Caco-2 (cell line): ENCODE measurements at regions of chr13 and their contacts with region 1.

Region 1: DNA sequence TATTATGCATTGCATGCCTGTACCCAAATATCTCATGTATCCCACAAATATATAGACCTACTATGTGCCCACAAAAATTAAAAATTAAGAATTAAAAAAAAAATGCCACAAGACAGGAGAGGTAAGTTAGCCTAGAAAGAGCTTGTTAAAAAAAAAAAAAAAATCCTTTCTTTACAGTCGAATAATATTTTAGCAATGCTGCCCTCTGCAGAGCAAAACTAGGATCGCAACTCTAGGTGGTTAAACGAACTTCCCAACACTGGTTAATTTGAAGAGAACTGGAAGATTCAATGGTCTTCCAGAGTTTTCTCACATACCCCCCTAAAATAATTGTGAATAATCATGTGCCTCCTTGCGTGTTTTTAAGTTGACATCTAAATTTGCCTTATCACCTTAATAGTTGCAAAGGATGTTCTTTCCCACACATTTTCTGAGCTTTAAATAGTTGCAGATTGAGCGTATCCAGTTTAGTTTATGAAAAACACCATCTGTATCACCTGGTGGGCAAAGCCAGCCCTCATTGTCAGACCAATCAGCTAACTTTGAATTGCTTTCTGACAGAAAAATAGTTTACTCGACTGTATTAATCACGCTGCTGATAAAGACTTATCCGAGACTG is 47.4 kb upstream of the RCBTB2 start:
- DNase-seq: peak; percentile 57 to 77
- H3K4me3 ChIP-seq: no peak overlapping the region
- H3K4me3 Mint-ChIP-seq: no peak overlapping the region
- H3K27ac Mint-ChIP-seq: no peak overlapping the region
- H3K4me1 ChIP-seq: peaks cover 6% of the 10 kb centered on the region; the same call in 1 of the 2 replicates
- H3K4me1 Mint-ChIP-seq: no peaks in the 10 kb centered on the region
- H3K27me3 ChIP-seq: no peaks in the 10 kb centered on the region
- H3K27me3 Mint-ChIP-seq: peaks cover 3% of the 10 kb centered on the region
- CTCF ChIP-seq: peak; percentile 73 to 75

Region 2: DNA sequence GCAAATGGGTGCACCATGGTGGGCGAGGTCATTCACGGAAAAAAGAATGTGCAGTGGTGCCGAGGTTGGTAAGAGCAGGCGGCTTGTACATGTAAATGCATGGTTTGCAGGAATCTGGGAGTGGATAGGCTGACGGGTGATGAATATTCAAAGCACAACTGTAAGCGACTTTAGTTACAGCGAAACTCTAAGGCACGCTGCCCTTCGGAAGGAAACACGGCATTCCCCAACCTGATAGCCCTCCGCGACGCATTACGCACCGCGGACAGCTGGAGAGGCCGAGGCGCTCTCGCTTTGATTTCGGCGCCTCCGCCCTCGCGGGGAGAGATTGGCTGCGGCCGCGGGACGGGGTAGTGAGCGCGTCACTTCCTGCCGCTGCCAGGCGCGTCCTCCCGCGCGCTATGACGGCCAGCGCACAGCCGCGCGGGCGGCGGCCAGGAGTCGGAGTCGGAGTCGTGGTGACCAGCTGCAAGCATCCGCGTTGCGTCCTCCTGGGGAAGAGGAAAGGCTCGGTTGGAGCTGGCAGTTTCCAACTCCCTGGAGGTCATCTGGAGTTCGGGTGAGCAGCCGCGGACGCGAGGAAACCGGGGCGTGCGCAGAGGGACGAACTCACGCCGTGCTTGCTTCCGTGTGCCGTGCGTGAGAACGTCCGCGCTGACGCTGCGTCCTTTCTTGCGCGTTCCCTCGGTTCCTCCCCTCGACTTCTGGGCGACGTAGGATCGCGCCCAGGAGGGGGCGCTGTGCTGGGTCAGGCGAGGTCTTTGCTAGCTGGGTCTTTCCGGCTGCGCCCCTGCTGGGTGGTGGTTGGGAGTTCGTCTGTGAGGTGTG is 542.7 kb before region 1 on chr13 and contains the start of gene NUDT15:
- CTCF ChIA-PET with region 1: interaction called, 4 read pairs
- POLR2A ChIA-PET with region 1: no interaction called
- intact Hi-C with region 1: loop called (anchors 1 kb)
- DNase-seq: peak; percentile 96 to 98
- H3K4me3 ChIP-seq: peak within 1 kb of the TSS; percentile 55
- H3K4me3 Mint-ChIP-seq: peak within 1 kb of the TSS; percentile 96
- H3K27ac Mint-ChIP-seq: peak within 1 kb of the TSS; percentile 95
- H3K4me1 ChIP-seq: peaks cover 25% of the 10 kb centered on the region; the same call in 1 of the 2 replicates
- H3K4me1 Mint-ChIP-seq: peaks cover 10% of the 10 kb centered on the region
- H3K27me3 ChIP-seq: no peaks in the 10 kb centered on the region
- H3K27me3 Mint-ChIP-seq: no peaks in the 10 kb centered on the region
- CTCF ChIP-seq: peak; percentile 99 to 100
- total RNA-seq, gene NUDT15: 32.3 and 36.0 TPM in 2 replicates

Region 3: GRCh38 chr13:48126944-48127830 is 453.1 kb before region 1 on chr13:
- CTCF ChIA-PET with region 1: interaction called, 9 read pairs
- POLR2A ChIA-PET with region 1: no interaction called
- intact Hi-C with region 1: loop called (anchors 1 kb)
- DNase-seq: peak in 1 of 2 experiments; percentile 61
- H3K4me3 ChIP-seq: no peak overlapping the region
- H3K4me3 Mint-ChIP-seq: no peak overlapping the region
- H3K27ac Mint-ChIP-seq: no peak overlapping the region
- H3K4me1 ChIP-seq: peaks cover 6% of the 10 kb centered on the region; the same call in 1 of the 2 replicates
- H3K4me1 Mint-ChIP-seq: no peaks in the 10 kb centered on the region
- H3K27me3 ChIP-seq: no peaks in the 10 kb centered on the region
- H3K27me3 Mint-ChIP-seq: no peaks in the 10 kb centered on the region
- CTCF ChIP-seq: peak; percentile 56 to 67

Region 4: GRCh38 chr13:48233046-48233907 is 347.0 kb before region 1 on chr13 and contains the start of gene ITM2B:
- CTCF ChIA-PET with region 1: no interaction called
- POLR2A ChIA-PET with region 1: interaction called, 9 read pairs
- intact Hi-C with region 1: loop called (anchors 5 kb)
- DNase-seq: peak; percentile 79 to 82
- H3K4me3 ChIP-seq: peak within 1 kb of the TSS; percentile 91
- H3K4me3 Mint-ChIP-seq: peak within 1 kb of the TSS; percentile 89
- H3K27ac Mint-ChIP-seq: peak within 1 kb of the TSS; percentile 90
- H3K4me1 ChIP-seq: peaks cover 15% of the 10 kb centered on the region; the same call in 1 of the 2 replicates
- H3K4me1 Mint-ChIP-seq: peaks cover 13% of the 10 kb centered on the region
- H3K27me3 ChIP-seq: no peaks in the 10 kb centered on the region
- H3K27me3 Mint-ChIP-seq: no peaks in the 10 kb centered on the region
- CTCF ChIP-seq: peak; percentile 23 to 28
- total RNA-seq, gene ITM2B: 202 and 224 TPM in 2 replicates

Region 5: GRCh38 chr13:48334534-48335127 is 245.7 kb before region 1 on chr13:
- CTCF ChIA-PET with region 1: interaction called, 40 read pairs
- POLR2A ChIA-PET with region 1: no interaction called
- intact Hi-C with region 1: loop called (anchors 1 kb)
- DNase-seq: peak in 1 of 2 experiments; percentile 17
- H3K4me3 ChIP-seq: no peak overlapping the region
- H3K4me3 Mint-ChIP-seq: no peak overlapping the region
- H3K27ac Mint-ChIP-seq: no peak overlapping the region
- H3K4me1 ChIP-seq: no peaks in the 10 kb centered on the region
- H3K4me1 Mint-ChIP-seq: no peaks in the 10 kb centered on the region
- H3K27me3 ChIP-seq: no peaks in the 10 kb centered on the region
- H3K27me3 Mint-ChIP-seq: no peaks in the 10 kb centered on the region
- CTCF ChIP-seq: peak; percentile 29 to 55

Region 6: GRCh38 chr13:48532506-48533499 is 47.5 kb before region 1 on chr13 and contains the start of gene RCBTB2:
- CTCF ChIA-PET with region 1: interaction called, 13 read pairs
- POLR2A ChIA-PET with region 1: interaction called, 6 read pairs
- intact Hi-C with region 1: loop called (anchors 2 kb)
- DNase-seq: peak; percentile 98 to 99
- H3K4me3 ChIP-seq: peak within 1 kb of the TSS; percentile 97
- H3K4me3 Mint-ChIP-seq: peak within 1 kb of the TSS; percentile 91
- H3K27ac Mint-ChIP-seq: peak within 1 kb of the TSS; percentile 89
- H3K4me1 ChIP-seq: peaks cover 12% of the 10 kb centered on the region
- H3K4me1 Mint-ChIP-seq: no peaks in the 10 kb centered on the region
- H3K27me3 ChIP-seq: no peaks in the 10 kb centered on the region
- H3K27me3 Mint-ChIP-seq: no peaks in the 10 kb centered on the region
- CTCF ChIP-seq: no peak
- total RNA-seq, gene RCBTB2: 0.74 and 1.1 TPM in 2 replicates

Region 7: GRCh38 chr13:48769107-48769704 is 188.9 kb after region 1 on chr13:
- CTCF ChIA-PET with region 1: interaction called, 12 read pairs
- POLR2A ChIA-PET with region 1: no interaction called
- intact Hi-C with region 1: no loop called
- DNase-seq: peak; percentile 85 to 88
- H3K4me3 ChIP-seq: no peak overlapping the region
- H3K4me3 Mint-ChIP-seq: no peak overlapping the region
- H3K27ac Mint-ChIP-seq: no peak overlapping the region
- H3K4me1 ChIP-seq: no peaks in the 10 kb centered on the region
- H3K4me1 Mint-ChIP-seq: peaks cover 5% of the 10 kb centered on the region
- H3K27me3 ChIP-seq: no peaks in the 10 kb centered on the region; the same call in 1 of the 2 replicates
- H3K27me3 Mint-ChIP-seq: peaks cover 21% of the 10 kb centered on the region
- CTCF ChIP-seq: peak; percentile 99 to 100